ENCODE measurements at regions of chr15 and their contacts with region 1.

Region 1: GRCh38 chr15:23823508-23823907 is 136.4 kb upstream of the NDN start:
- DNase-seq: no peak
- ATAC-seq: no peak
- H3K4me3 ChIP-seq: no peak overlapping the region
- H3K27ac ChIP-seq: no peak overlapping the region
- H3K4me1 ChIP-seq: no peaks in the 10 kb centered on the region
- H3K27me3 ChIP-seq: no peaks in the 10 kb centered on the region

Region 2: DNA sequence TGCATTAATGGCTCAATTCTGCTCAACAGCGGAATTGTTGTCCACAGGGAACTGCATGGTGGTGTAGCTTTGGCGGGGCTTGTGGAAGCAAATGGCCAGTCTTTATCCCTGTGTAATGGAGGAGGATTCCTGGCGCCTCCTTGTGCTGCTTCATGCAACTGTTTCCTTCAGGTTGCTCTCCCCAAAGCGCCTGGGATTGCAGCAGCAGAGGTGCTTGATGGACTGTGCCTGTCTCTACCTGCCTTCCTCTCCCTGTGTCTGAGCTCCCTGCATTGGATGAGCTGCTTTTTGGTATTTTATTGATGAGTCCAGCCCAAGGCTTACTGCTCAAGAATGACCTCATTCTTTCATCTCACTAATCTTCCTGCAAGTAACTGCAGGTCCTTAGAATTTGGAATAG is 63.5 kb before region 1 on chr15:
- intact Hi-C with region 1: loop called in 1 of 4 experiments (anchors 10 kb)
- DNase-seq: no peak
- ATAC-seq: no peak
- H3K4me3 ChIP-seq: no peak overlapping the region
- H3K27ac ChIP-seq: no peak overlapping the region
- H3K4me1 ChIP-seq: no peaks in the 10 kb centered on the region
- H3K27me3 ChIP-seq: no peaks in the 10 kb centered on the region